Motor neuron (in vitro differentiated cells): ENCODE measurements at regions of chr12 and their contacts with region 1.

Region 1: GRCh38 chr12:70719672-70720420 is 82.6 kb upstream of the PTPRB start:
- ATAC-seq: peak; percentile 32 to 92 (median 80)
- H3K4me3 ChIP-seq: peak overlapping the region in 2 of 5 donors; percentile 15 to 16
- H3K27ac ChIP-seq: no peak overlapping the region
- H3K4me1 ChIP-seq: no peaks in the 10 kb centered on the region

Region 2: GRCh38 chr12:69779928-69780327 is 939.9 kb before region 1 on chr12:
- in situ Hi-C with region 1: loop called in 1 of 9 experiments (anchors 25 kb)
- ATAC-seq: peak in 5 of 8 experiments; percentile 27 to 88 (median 73)
- H3K4me3 ChIP-seq: no peak overlapping the region
- H3K27ac ChIP-seq: no peak overlapping the region
- H3K4me1 ChIP-seq: no peaks in the 10 kb centered on the region

Region 3: DNA sequence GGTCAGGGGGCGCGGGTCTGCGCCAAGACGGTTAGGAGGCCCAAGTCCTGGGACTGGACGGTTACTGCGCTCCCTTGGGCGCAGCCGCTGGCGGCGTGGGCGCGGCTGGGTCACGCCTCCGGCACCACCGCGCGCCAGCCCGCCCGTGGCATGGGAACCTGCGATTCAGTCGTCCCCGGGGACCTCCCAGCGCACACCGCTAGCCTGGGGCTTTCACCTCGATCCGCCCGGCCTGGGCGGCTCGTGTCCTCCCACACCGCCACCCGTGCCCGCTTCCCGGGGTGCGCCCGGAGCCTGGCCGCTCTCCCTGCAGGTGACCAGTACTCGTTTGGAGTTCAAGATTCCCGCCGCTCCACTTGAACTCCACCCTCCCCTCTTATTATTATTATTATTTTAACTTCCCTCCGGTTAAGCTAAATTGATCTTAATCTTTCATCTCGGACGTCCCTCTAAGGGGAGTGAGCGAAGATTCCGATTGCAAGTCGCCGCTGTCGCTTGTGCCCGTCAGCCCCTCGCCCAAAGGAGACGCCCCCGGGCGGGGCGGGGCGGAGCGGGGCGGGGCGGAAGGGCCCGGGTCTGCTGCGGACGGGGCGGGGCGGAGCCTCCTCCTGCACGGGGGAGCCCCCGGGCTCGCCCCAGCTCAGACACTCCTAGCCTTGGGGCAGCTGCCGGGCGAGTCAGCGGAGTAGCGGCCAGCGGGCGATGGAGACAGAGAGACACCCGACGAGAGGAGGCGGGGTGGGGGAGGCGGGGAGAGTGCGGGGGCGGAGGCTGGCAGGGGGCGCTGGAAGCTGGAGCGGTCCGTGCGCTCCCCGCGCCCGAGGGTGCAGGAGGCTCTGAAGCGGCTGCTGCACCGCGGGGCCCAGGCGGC is 354.0 kb before region 1 on chr12 and contains the start of gene KCNMB4:
- in situ Hi-C with region 1: loop called in 1 of 9 experiments (anchors 25 kb)
- ATAC-seq: peak; percentile 66 to 91 (median 89)
- H3K4me3 ChIP-seq: peak within 1 kb of the TSS; percentile 65 to 98 (median 79)
- H3K27ac ChIP-seq: peak within 1 kb of the TSS; percentile 69 to 82
- H3K4me1 ChIP-seq: peaks cover 3 to 14% of the 10 kb centered on the region in 2 donors
- total RNA-seq, gene KCNMB4: 0.20 to 13.5 (median 7.4) TPM

Region 4: GRCh38 chr12:70660620-70661219 is 59.1 kb before region 1 on chr12:
- in situ Hi-C with region 1: no loop called
- ATAC-seq: peak; percentile 27 to 89 (median 56)
- H3K4me3 ChIP-seq: no peak overlapping the region
- H3K27ac ChIP-seq: no peak overlapping the region
- H3K4me1 ChIP-seq: peaks cover 5 to 7% of the 10 kb centered on the region in 2 donors

Region 5: GRCh38 chr12:70788774-70789173 is 68.9 kb after region 1 on chr12:
- in situ Hi-C with region 1: no loop called
- ATAC-seq: no peak
- H3K4me3 ChIP-seq: no peak overlapping the region
- H3K27ac ChIP-seq: no peak overlapping the region
- H3K4me1 ChIP-seq: peaks cover 0 to 5% of the 10 kb centered on the region in 2 donors